ENCODE measurements at regions of chr12 and their contacts with region 1.

Region 1: DNA sequence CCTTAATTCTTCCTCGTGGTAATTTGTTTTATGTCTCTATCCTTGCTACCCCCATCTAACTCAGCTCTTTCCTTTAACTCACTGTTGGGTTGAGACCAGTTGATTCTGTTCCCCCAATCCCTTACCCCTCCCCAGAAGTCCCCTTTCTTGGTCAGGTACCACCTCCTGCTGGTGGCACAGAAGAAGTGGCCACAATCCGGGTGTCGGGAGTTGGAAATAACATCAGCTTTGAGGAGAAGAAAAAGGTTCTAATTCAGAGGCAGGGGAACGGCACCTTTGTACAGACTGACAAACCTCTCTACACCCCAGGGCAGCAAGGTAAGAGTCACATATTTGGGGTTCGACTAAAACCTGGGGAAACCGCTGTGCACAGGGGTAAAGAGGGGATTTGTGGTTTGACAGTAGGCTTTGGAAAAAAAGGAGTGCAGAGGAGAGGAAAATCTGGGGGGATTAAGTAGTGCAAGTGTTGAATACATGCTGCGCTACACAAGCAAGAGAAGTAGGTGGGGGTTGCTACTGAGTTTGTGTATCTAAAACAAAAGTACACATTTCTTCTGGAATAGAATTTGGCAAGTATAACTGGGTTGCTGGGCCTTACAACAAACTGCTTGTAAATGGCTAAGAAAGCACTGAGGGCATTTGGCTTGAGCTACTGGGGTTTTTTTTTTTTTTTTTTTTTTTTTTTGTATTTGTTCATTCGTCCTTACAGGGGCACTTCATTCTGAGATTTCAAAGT is 1.3 kb downstream of the A2ML1 start:
- DNase-seq: no peak
- H3K4me3 ChIP-seq: no peak overlapping the region
- H3K27ac ChIP-seq: no peak overlapping the region
- H3K27me3 ChIP-seq: no peaks in the 10 kb centered on the region
- CTCF ChIP-seq: peak; percentile 62

Region 2: GRCh38 chr12:8675591-8676036 is 148.1 kb before region 1 on chr12:
- CTCF ChIA-PET with region 1: interaction called, 38 read pairs
- POLR2A ChIA-PET with region 1: no interaction called
- DNase-seq: no peak
- H3K4me3 ChIP-seq: no peak overlapping the region
- H3K27ac ChIP-seq: no peak overlapping the region
- H3K27me3 ChIP-seq: no peaks in the 10 kb centered on the region
- CTCF ChIP-seq: no peak

Region 3: DNA sequence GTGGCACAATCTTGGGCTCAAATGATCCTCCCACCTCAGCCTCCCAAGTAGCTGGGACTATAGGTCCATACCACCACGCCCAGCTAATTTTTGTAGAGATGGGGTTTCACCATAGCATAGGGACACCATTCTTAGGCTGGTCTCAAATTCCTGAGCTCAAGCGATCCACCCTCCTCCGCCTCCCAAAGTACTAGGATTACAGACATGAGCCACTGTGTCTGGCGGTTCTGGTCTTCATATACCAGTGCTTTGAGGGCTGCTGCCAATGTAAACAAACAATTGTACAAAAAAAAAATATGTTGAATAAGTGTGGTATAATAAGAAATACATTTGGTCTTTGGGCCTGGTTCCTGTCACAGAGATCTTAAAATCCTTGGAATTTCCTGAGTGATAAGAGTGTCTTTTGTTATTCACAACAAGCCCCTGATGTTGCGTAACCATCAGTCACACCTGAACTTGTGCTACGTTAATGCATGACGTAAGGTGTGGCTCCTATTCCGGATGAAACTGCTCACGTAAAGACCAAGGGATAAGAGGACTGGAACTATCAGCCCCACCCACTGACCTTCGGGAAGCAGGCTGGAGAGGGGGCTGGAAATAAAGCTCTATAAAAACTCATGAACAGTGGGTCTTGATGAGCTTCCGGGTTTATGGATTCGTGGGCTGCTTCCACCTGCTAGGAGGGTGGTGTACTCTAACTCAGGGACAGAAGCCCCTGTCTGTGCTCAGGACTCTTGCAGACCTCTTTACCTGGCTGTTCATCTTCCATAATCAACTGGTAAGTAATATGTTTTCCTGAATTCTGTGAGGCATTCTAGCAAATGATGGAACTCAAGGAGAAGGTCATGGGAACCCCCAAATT is 142.5 kb before region 1 on chr12:
- CTCF ChIA-PET with region 1: interaction called, 38 read pairs
- POLR2A ChIA-PET with region 1: no interaction called
- DNase-seq: no peak
- H3K4me3 ChIP-seq: no peak overlapping the region
- H3K27ac ChIP-seq: no peak overlapping the region
- H3K27me3 ChIP-seq: peaks cover 3% of the 10 kb centered on the region
- CTCF ChIP-seq: no peak

Region 4: DNA sequence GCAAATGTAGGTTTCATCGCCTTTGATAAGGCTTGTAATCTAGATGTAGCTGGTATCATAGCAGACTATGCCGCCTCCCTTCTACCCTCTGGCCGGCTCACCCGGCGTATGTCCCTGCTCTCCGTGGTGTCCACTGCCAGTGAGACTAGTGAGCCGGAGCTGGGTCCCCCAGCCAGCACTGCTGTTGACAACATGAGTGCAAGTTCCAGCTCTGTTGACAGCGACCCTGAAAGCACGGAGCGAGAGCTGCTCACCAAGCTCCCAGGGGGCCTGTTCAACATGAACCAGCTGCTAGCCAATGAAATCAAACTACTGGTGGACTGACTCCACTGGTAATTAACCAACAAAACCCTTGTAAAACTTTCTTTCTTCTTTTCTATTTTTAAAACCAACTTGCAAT is 50.3 kb before region 1 on chr12:
- CTCF ChIA-PET with region 1: no interaction called
- POLR2A ChIA-PET with region 1: no interaction called
- DNase-seq: no peak
- H3K4me3 ChIP-seq: no peak overlapping the region
- H3K27ac ChIP-seq: no peak overlapping the region
- H3K27me3 ChIP-seq: no peaks in the 10 kb centered on the region
- CTCF ChIP-seq: no peak

Region 5: GRCh38 chr12:8844665-8845064 is 20.9 kb after region 1 on chr12:
- CTCF ChIA-PET with region 1: no interaction called
- POLR2A ChIA-PET with region 1: no interaction called
- DNase-seq: no peak
- H3K4me3 ChIP-seq: no peak overlapping the region
- H3K27ac ChIP-seq: no peak overlapping the region
- H3K27me3 ChIP-seq: peaks cover 3% of the 10 kb centered on the region
- CTCF ChIP-seq: no peak